ENCODE measurements at regions of chr10 and their contacts with region 1.

Region 1: DNA sequence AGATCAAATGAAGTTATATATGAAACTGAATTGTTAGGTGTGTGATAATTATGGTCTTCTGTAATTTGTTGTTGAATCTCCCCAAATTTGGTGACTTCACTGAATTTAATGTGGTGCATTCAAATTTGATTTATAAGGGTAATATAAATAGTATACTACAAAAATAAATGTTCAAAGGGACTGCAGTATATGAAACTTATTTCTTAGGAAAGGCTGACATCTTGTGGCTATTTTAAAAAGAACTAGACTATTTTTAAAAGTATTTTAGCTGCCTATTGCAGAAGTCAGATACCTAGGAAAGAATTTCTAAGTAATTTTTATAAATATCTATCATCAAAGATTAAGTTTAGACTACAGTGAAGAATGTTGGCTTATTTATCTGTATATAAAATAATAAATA is 36.6 kb downstream of the ATRNL1 start:
- DNase-seq: peak in 1 of 2 donors; percentile 63
- H3K4me3 ChIP-seq: no peak overlapping the region
- H3K27ac ChIP-seq: no peak overlapping the region
- H3K4me1 ChIP-seq: no peaks in the 10 kb centered on the region
- H3K27me3 ChIP-seq: no peaks in the 10 kb centered on the region
- CTCF ChIP-seq: peak in 4 of 7 experiments; percentile 14 to 33 (median 22)
- EP300 ChIP-seq: no peak
- POLR2A ChIP-seq: no peak

Region 2: DNA sequence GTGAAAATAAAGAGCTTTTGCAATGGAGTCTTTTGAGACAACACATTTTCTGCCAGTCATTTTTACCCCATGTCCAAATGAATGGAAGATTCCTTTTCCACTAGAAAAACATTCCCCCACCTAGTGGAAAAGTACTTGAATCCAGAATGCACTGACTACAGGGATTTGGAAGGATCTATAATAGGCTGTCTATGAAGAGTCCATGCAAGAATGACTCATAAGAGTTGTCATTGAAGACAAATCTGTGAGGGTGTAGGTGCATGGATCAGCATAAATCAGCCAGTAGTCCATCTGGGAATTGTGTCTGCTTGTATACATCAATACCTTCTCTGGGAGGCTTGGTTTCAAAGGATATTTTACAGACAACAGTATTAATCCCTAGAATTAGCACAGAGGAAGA is 224.3 kb before region 1 on chr10:
- intact Hi-C with region 1: no loop called
- DNase-seq: no peak
- H3K4me3 ChIP-seq: no peak overlapping the region
- H3K27ac ChIP-seq: no peak overlapping the region
- H3K4me1 ChIP-seq: no peaks in the 10 kb centered on the region
- H3K27me3 ChIP-seq: no peaks in the 10 kb centered on the region
- CTCF ChIP-seq: no peak
- EP300 ChIP-seq: no peak
- POLR2A ChIP-seq: no peak

Region 3: GRCh38 chr10:115001506-115002381 is 128.0 kb before region 1 on chr10:
- intact Hi-C with region 1: loop called (anchors 10 kb)
- DNase-seq: peak in 1 of 2 donors; percentile 20
- H3K4me3 ChIP-seq: peak overlapping the region in 2 of 4 donors; percentile 15 to 20
- H3K27ac ChIP-seq: no peak overlapping the region
- H3K4me1 ChIP-seq: no peaks in the 10 kb centered on the region
- H3K27me3 ChIP-seq: peaks cover 0 to 8% (median 0%) of the 10 kb centered on the region in 3 donors
- CTCF ChIP-seq: no peak
- EP300 ChIP-seq: no peak
- POLR2A ChIP-seq: no peak